ENCODE measurements at regions of chr13 and their contacts with region 1.

Region 1: DNA sequence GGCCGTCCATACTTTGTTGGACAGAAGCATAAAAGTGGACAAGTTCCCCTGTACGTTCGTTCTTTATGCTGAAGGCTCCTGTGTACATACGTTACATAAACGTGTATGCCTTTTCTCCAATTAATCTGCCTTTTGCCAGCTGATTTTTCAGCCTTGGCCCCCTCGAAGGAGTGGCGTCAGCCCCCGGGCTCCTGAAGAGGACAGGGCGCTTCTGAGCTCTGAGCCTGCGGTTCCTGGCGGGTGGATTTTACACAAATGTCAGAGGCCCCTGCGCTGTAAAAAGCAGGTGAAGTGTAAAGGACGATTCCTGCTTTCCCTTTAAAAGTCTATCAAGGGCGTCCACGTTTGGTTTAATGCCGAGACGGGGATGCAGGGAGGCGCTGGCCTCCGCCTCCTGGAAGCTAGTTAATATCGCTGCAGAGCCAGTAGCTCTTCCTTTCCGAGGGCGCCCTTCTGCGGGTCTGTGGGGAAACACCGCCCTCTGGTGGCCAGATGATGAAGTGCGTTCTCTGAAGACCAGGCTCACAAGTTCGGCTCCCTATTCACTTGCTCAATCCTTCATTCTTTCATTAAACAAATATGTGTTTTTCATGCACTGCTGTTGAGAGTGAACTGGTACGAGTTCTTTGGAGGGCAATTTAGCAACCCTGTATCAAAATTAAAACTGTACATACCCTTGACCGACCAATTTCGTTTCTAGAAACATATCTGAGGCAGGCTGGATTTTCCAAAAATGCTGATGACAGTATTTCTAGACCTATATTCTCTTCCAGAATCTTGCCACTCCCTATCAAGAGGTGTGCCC is 62.0 kb downstream of the GPR12 start:
- DNase-seq: peak; percentile 88
- ATAC-seq: peak; percentile 75
- H3K4me3 Mint-ChIP-seq: peak overlapping the region; percentile 46
- H3K27ac Mint-ChIP-seq: no peak overlapping the region
- H3K4me1 Mint-ChIP-seq: peaks cover 15% of the 10 kb centered on the region
- H3K27me3 Mint-ChIP-seq: peaks cover 6% of the 10 kb centered on the region; the same call in 1 of the 2 replicates
- CTCF ChIP-seq: peak; percentile 99

Region 2: GRCh38 chr13:26412263-26412662 is 286.3 kb before region 1 on chr13:
- CTCF ChIA-PET with region 1: interaction called, 17 read pairs
- POLR2A ChIA-PET with region 1: no interaction called
- DNase-seq: no peak
- ATAC-seq: no peak
- H3K4me3 Mint-ChIP-seq: no peak overlapping the region
- H3K27ac Mint-ChIP-seq: 0 out of 2 replicates have a peak overlapping the region, but pooled peaks have one; percentile 10
- H3K4me1 Mint-ChIP-seq: peaks cover 4% of the 10 kb centered on the region
- H3K27me3 Mint-ChIP-seq: no peaks in the 10 kb centered on the region
- CTCF ChIP-seq: no peak

Region 3: DNA sequence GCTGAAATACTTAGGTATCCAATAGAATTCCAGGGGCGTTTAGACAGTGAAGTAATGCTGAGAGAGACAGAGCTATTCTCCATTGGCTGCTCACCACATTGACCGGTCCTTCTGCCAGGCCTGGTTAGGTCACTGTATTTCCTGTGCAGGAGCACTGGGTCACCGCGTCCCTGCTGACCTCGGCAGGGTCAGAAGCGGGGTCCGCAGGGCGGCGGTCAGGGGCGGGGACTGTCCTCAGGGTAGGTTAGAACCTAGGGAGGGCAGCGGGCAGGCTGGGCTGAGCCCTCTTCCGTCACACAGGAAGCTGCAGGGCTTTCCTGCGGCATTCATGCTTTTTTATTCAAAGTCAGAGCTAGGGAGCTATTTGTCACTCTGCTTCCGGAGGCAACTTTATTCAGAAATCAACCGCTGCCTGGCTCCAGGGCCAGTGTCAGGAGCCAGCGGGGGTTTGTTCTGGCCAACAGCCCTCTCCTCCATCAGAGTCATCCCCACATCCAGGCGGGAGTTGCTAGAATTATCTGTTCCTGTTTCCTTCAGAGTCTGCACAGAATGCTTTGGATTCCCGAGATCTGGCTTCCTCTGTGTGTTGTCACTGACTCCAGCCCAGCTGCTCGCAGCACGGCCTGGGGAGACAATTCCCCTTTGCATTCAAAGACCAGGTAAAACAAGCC is 222.3 kb before region 1 on chr13:
- CTCF ChIA-PET with region 1: interaction called, 33 read pairs
- POLR2A ChIA-PET with region 1: interaction called, 5 read pairs
- DNase-seq: peak; percentile 51
- ATAC-seq: peak; percentile 60
- H3K4me3 Mint-ChIP-seq: peak overlapping the region; percentile 68
- H3K27ac Mint-ChIP-seq: peak overlapping the region; percentile 97
- H3K4me1 Mint-ChIP-seq: peaks cover 53% of the 10 kb centered on the region
- H3K27me3 Mint-ChIP-seq: no peaks in the 10 kb centered on the region
- CTCF ChIP-seq: no peak

Region 4: GRCh38 chr13:26502826-26503225 is 195.8 kb before region 1 on chr13:
- CTCF ChIA-PET with region 1: interaction called, 10 read pairs
- POLR2A ChIA-PET with region 1: no interaction called
- DNase-seq: no peak
- ATAC-seq: peak; percentile 74
- H3K4me3 Mint-ChIP-seq: no peak overlapping the region
- H3K27ac Mint-ChIP-seq: no peak overlapping the region
- H3K4me1 Mint-ChIP-seq: peaks cover 11% of the 10 kb centered on the region
- H3K27me3 Mint-ChIP-seq: no peaks in the 10 kb centered on the region; the same call in 1 of the 2 replicates
- CTCF ChIP-seq: no peak

Region 5: DNA sequence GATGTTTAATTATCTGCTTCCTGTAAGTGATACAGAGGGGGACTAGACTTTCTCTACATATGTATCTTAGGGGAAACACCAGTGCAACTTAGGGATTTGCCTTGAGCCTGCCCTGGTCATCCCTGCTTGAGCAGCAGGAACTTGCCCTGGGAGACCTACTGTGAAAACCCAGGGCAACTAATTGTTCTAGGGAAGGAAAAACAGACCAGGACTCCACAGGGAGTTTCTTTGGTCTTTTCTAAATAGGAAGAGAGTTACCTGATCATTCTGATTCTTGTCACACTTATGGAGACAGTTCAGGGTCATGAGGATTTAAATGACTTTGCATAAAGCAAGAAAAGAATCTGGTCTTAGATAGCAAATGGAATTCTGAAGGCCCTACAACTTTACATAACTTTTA is 52.0 kb before region 1 on chr13:
- CTCF ChIA-PET with region 1: no interaction called
- POLR2A ChIA-PET with region 1: no interaction called
- DNase-seq: no peak
- ATAC-seq: peak; percentile 98
- H3K4me3 Mint-ChIP-seq: peak overlapping the region; percentile 39; the same call in 1 of the 2 replicates
- H3K27ac Mint-ChIP-seq: peak overlapping the region; percentile 82
- H3K4me1 Mint-ChIP-seq: peaks cover 34% of the 10 kb centered on the region
- H3K27me3 Mint-ChIP-seq: no peaks in the 10 kb centered on the region
- CTCF ChIP-seq: no peak

Region 6: GRCh38 chr13:26656919-26657318 is 41.7 kb before region 1 on chr13:
- CTCF ChIA-PET with region 1: interaction called, 28 read pairs
- POLR2A ChIA-PET with region 1: no interaction called
- DNase-seq: no peak
- ATAC-seq: peak; percentile 53
- H3K4me3 Mint-ChIP-seq: no peak overlapping the region
- H3K27ac Mint-ChIP-seq: no peak overlapping the region
- H3K4me1 Mint-ChIP-seq: no peaks in the 10 kb centered on the region
- H3K27me3 Mint-ChIP-seq: no peaks in the 10 kb centered on the region
- CTCF ChIP-seq: no peak

Region 7: DNA sequence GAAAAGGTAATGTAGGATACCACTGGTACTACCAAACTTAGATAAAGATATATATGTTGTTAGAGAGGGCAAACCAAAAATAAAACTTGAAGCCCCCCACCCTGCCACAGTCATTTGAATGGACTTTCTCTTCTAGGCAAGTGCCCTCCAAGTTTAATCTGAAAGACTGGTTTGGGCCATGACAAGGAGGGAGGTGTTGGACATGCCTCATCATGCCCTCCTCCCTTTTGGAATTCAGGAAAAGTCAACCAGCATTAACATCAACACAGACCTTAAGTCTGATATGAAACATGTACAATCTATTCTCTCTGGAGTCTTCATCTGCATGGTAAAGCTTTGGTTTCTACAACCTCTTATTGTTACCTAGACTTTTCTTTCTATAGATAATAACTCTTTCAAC is 108.3 kb after region 1 on chr13:
- CTCF ChIA-PET with region 1: no interaction called
- POLR2A ChIA-PET with region 1: no interaction called
- DNase-seq: no peak
- ATAC-seq: no peak
- H3K4me3 Mint-ChIP-seq: no peak overlapping the region
- H3K27ac Mint-ChIP-seq: no peak overlapping the region
- H3K4me1 Mint-ChIP-seq: peaks cover 26% of the 10 kb centered on the region
- H3K27me3 Mint-ChIP-seq: peaks cover 3% of the 10 kb centered on the region; the same call in 1 of the 2 replicates
- CTCF ChIP-seq: no peak

Region 8: GRCh38 chr13:26929971-26930730 is 231.6 kb after region 1 on chr13:
- CTCF ChIA-PET with region 1: interaction called, 10 read pairs
- POLR2A ChIA-PET with region 1: no interaction called
- DNase-seq: peak; percentile 89
- ATAC-seq: peak; percentile 93
- H3K4me3 Mint-ChIP-seq: peak overlapping the region; percentile 59
- H3K27ac Mint-ChIP-seq: 0 out of 2 replicates have a peak overlapping the region, but pooled peaks have one; percentile 33
- H3K4me1 Mint-ChIP-seq: 0 out of 2 replicates have a peak, but pooled peaks cover 2% of the 10 kb centered on the region
- H3K27me3 Mint-ChIP-seq: no peaks in the 10 kb centered on the region; the same call in 1 of the 2 replicates
- CTCF ChIP-seq: peak; percentile 97